Left ventricle myocardium superior (tissue), 1 donor: ENCODE measurements at regions of chr6 and their contacts with region 1.

Region 1: GRCh38 chr6:46501136-46502089 is 10.2 kb upstream of the RCAN2 start:
- DNase-seq: no peak
- ATAC-seq: no peak

Region 2: GRCh38 chr6:46612645-46613044 is 111.2 kb after region 1 on chr6:
- intact Hi-C with region 1: loop called (anchors 10 kb)
- DNase-seq: peak; percentile 68
- ATAC-seq: peak; percentile 88